ENCODE measurements at regions of chr2 and their contacts with region 1.

Region 1: GRCh38 chr2:110993557-110994231 is 127.0 kb upstream of the BCL2L11 start:
- DNase-seq: no peak

Region 2: GRCh38 chr2:110853507-110853906 is 140.2 kb before region 1 on chr2:
- in situ Hi-C with region 1: loop called (anchors 25 kb)
- DNase-seq: peak; percentile 55

Region 3: DNA sequence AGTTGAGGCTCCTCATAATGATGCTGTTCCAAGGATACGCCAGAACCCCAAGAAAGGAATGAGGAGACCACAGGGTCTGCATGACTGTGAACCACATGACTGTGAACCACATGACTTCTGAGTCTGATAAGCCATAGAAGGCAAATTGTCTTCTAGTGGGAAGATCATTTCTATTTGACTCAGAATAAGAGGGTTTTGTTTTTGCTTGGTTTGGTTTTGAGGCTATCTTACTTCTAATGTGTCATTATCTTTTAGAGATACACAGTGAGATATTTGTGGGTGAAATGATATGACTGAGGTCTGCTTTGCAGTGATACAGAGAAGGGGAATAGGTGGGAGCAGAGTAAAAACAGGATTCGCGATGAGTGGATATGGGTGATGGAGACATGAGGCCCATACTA is 98.1 kb after region 1 on chr2:
- in situ Hi-C with region 1: no loop called
- DNase-seq: peak; percentile 24

Measured in SK-MEL-5 (cell line).